Common myeloid progenitor, CD34-positive (primary cell): ENCODE measurements at regions of chr6 and their contacts with region 1.

Region 1: GRCh38 chr6:36196113-36196879 is at the start of gene BRPF3:
- DNase-seq: peak; percentile 69 to 84 (median 77)
- H3K4me3 ChIP-seq: peak within 1 kb of the TSS; percentile 34 to 87 (median 69)
- H3K27ac ChIP-seq: peak within 1 kb of the TSS in 1 of 2 experiments; percentile 80
- H3K4me1 ChIP-seq: peaks cover 2 to 15% (median 7%) of the 10 kb centered on the region in 4 experiments
- H3K27me3 ChIP-seq: no peaks in the 10 kb centered on the region

Region 2: GRCh38 chr6:36139429-36139828 is 56.9 kb before region 1 on chr6:
- CTCF ChIA-PET with region 1: interaction called, 11 read pairs
- POLR2A ChIA-PET with region 1: no interaction called
- DNase-seq: peak; percentile 36 to 71 (median 69)
- H3K4me3 ChIP-seq: no peak overlapping the region
- H3K27ac ChIP-seq: no peak overlapping the region
- H3K4me1 ChIP-seq: peaks cover 0 to 5% (median 0%) of the 10 kb centered on the region in 4 experiments
- H3K27me3 ChIP-seq: peaks cover 0 to 12% (median 0%) of the 10 kb centered on the region in 5 experiments

Region 3: DNA sequence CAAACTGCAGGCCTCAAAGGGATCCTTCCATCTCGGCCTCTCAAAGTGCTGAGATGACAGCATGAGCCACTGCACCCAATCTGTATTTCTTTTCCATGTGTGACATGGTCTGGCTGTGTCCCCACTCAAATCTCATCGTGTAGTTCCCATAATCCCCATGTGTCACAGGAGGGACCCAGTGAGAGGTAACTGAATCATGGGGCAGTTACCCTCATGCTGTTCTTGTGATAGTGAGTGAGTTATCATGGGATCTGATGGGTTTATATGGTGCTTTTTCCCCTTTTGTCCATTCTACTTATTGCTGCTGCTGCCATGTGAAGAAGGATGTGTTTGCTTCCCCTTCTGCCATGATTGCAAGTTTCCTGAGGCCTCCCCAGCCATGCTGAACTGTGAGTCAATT is 10.1 kb before region 1 on chr6:
- CTCF ChIA-PET with region 1: no interaction called
- POLR2A ChIA-PET with region 1: no interaction called
- DNase-seq: no peak
- H3K4me3 ChIP-seq: no peak overlapping the region
- H3K27ac ChIP-seq: no peak overlapping the region
- H3K4me1 ChIP-seq: peaks cover 5 to 8% (median 6%) of the 10 kb centered on the region in 4 experiments
- H3K27me3 ChIP-seq: no peaks in the 10 kb centered on the region

Region 4: GRCh38 chr6:36252005-36252404 is 55.7 kb after region 1 on chr6:
- CTCF ChIA-PET with region 1: no interaction called
- POLR2A ChIA-PET with region 1: no interaction called
- DNase-seq: no peak
- H3K4me3 ChIP-seq: no peak overlapping the region
- H3K27ac ChIP-seq: no peak overlapping the region
- H3K4me1 ChIP-seq: peaks cover 0 to 16% (median 4%) of the 10 kb centered on the region in 4 experiments
- H3K27me3 ChIP-seq: no peaks in the 10 kb centered on the region

Region 5: DNA sequence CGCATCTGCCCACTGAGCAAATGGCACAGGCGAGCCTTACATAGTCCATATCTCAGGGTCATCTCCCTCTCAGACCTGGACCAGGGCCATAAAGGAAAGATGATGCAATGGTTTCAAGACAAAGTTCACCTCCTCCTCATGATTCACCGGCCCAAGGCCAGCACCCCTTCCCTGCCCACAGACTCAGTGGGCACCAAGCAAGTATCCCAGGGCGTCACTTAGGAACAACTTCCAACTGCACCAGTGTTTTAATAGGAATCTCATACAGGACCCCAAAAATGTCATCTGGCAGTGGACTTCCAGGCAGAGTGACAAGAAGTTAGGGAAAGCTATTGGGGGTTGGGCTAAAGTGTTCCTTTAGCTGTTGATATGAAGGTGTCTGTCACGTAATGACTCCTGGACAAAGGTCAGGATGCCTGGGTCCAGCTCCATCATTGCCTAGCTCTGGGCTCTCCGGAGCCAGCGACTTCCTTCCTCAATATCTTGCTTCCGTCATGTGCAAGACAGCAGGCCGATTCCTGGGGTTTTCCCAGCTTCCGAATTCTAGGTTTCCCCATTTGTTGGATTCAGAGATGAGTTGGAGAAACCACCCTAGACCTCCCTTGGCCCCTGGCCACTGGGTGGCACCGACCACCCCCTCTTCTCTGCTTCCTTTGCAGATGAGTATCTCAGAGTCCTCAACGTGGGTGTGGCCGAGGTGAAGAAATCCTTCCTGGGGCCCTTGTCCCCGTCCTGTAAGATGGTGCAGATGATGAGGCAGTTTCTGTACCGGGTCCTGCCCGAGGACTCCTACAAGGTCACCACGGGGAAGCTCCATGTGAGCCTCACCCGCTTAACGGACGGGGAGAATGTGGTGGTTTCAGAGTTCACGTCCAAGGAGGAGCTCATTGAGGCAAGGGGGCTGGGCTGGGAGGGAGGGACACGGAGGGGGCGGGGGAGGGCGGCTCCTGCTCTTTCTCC is 94.6 kb after region 1 on chr6:
- CTCF ChIA-PET with region 1: no interaction called
- POLR2A ChIA-PET with region 1: no interaction called
- DNase-seq: peak in 2 of 3 donors; percentile 23 to 31
- H3K4me3 ChIP-seq: no peak overlapping the region
- H3K27ac ChIP-seq: no peak overlapping the region
- H3K4me1 ChIP-seq: peaks cover 0 to 10% (median 2%) of the 10 kb centered on the region in 4 experiments
- H3K27me3 ChIP-seq: peaks cover 0 to 12% (median 3%) of the 10 kb centered on the region in 5 experiments